ENCODE measurements at regions of chr1 and their contacts with region 1.

Region 1: GRCh38 chr1:169511316-169512028 is 25.7 kb upstream of the SLC19A2 start:
- DNase-seq: no peak
- H3K4me3 Mint-ChIP-seq: no peak overlapping the region
- H3K27ac Mint-ChIP-seq: peak overlapping the region; percentile 65
- H3K4me1 Mint-ChIP-seq: peaks cover 89% of the 10 kb centered on the region
- H3K27me3 Mint-ChIP-seq: no peaks in the 10 kb centered on the region
- CTCF ChIP-seq: no peak

Region 2: DNA sequence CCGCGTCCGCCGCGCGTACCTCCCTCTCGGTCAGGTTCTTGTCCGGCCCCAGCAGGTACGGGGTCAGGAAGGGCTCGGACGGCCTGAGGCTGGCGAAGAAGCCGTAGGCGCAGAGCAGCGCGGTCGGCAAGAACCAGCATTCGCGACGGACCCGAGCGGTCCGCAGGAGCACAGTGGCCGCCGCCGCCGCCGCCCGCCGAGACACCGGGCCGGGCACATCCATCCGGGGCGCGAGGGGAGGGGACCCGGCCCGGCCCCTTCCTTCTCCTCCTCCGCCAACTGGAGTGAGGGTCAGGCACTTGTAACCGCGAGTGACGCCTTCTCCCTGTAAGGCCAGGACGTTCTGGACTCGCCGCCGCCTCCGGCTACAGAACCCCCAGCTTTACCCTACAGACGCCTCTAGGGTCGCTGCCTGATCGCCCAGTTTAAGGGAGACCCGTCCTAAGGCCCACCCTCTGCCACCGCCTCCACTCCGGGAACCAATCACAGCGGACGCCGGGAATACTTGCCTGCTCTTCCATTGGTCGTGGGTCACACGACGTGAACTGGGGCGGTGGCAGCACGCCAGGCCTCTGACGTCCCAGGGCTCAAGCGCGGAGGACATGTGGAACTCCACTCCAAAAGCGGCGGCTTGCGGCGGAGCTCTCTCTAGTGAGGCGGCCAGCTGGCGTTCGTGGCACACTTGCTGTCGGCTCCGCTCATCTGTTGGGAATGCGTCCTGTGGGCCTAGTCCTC is 25.8 kb before region 1 on chr1 and contains the start of gene SLC19A2:
- CTCF ChIA-PET with region 1: interaction called, 25 read pairs
- intact Hi-C with region 1: loop called (anchors 2 kb)
- DNase-seq: peak; percentile 99
- H3K4me3 Mint-ChIP-seq: peak within 1 kb of the TSS; percentile 87
- H3K27ac Mint-ChIP-seq: peak within 1 kb of the TSS; percentile 99
- H3K4me1 Mint-ChIP-seq: peaks cover 62% of the 10 kb centered on the region
- H3K27me3 Mint-ChIP-seq: no peaks in the 10 kb centered on the region
- CTCF ChIP-seq: peak; percentile 49
- total RNA-seq, gene SLC19A2: 22.0 and 24.2 TPM in 2 replicates

Region 3: GRCh38 chr1:169495046-169495775 is 16.3 kb before region 1 on chr1:
- CTCF ChIA-PET with region 1: interaction called, 10 read pairs
- intact Hi-C with region 1: no loop called
- DNase-seq: no peak
- H3K4me3 Mint-ChIP-seq: no peak overlapping the region
- H3K27ac Mint-ChIP-seq: peak overlapping the region; percentile 13
- H3K4me1 Mint-ChIP-seq: peaks cover 48% of the 10 kb centered on the region
- H3K27me3 Mint-ChIP-seq: no peaks in the 10 kb centered on the region
- CTCF ChIP-seq: no peak

Region 4: GRCh38 chr1:169890761-169891538 is 379.5 kb after region 1 on chr1:
- CTCF ChIA-PET with region 1: no interaction called
- intact Hi-C with region 1: no loop called
- DNase-seq: peak; percentile 75
- H3K4me3 Mint-ChIP-seq: peak overlapping the region; percentile 86
- H3K27ac Mint-ChIP-seq: peak overlapping the region; percentile 100
- H3K4me1 Mint-ChIP-seq: peaks cover 54% of the 10 kb centered on the region
- H3K27me3 Mint-ChIP-seq: no peaks in the 10 kb centered on the region
- CTCF ChIP-seq: no peak

Measured in Calu3 (cell line).